ENCODE measurements at regions of chr5 and their contacts with region 1.

Region 1: DNA sequence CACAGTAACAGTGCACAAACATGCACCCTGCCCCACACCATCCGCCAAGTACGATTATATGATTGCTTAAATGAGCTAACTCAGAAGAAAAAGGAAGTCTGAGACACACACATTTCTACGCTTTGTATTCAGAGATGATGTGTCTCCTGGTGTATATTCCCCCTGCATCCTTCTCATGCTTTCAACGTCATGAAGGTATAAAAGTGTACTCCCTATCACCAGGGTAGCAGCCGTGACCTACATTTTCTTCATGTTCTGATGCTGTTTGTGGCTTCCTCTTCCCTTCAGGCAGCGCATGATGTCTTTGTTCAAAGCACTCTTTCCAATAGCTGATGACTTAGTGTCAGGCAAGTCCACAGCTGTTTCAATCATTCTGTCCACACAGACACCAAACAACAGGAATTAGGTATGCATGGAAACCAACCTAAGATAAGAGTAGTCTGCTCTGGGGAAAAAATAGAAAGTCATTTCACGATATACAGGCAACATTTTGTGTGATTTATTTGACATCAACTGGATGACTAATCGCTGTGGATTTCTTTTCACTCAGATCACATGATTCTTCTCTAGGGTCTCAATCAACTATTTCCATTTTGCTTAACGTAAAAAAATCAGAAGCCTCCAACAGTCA is 269.4 kb upstream of the PTGER4 start:
- DNase-seq: peak in 13 of 14 experiments; percentile 44 to 97 (median 66)
- ATAC-seq: peak; percentile 79
- H3K4me3 ChIP-seq: peak overlapping the region; percentile 33
- H3K4me3 Mint-ChIP-seq: peak overlapping the region; percentile 65
- H3K27ac ChIP-seq: peak overlapping the region; percentile 94 to 96
- H3K27ac Mint-ChIP-seq: peak overlapping the region; percentile 87
- H3K4me1 ChIP-seq: peaks cover 53% of the 10 kb centered on the region
- H3K4me1 Mint-ChIP-seq: peaks cover 53% of the 10 kb centered on the region
- H3K27me3 ChIP-seq: no peaks in the 10 kb centered on the region
- H3K27me3 Mint-ChIP-seq: no peaks in the 10 kb centered on the region
- CTCF ChIP-seq: no peak

Region 2: DNA sequence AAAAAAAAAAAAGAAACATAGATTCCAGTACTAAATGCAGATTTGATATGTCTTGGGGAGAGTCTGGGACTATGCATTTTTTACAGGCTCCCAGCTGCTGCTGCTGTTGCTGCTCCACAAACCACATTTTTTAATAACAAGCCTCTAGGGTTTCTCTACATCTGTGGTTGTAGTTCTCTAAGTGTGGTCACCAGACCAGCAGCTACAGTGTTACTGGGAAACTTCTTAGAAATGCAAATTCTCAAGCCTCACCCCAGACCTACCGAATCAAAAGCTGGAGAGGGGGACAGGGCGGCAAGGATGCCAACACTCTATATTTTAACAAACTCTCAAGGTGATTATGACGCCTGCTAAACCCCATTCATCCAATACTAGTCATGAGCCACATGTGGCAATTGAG is 24.1 kb before region 1 on chr5:
- CTCF ChIA-PET with region 1: interaction called, 12 read pairs
- POLR2A ChIA-PET with region 1: interaction called, 16 read pairs
- intact Hi-C with region 1: loop called in 1 of 2 experiments (anchors 2 kb)
- DNase-seq: peak in 4 of 14 experiments; percentile 9 to 76 (median 61)
- ATAC-seq: peak; percentile 62
- H3K4me3 ChIP-seq: no peak overlapping the region
- H3K4me3 Mint-ChIP-seq: no peak overlapping the region
- H3K27ac ChIP-seq: peak overlapping the region in 1 of 2 donors; percentile 33
- H3K27ac Mint-ChIP-seq: peak overlapping the region; percentile 65
- H3K4me1 ChIP-seq: peaks cover 45% of the 10 kb centered on the region
- H3K4me1 Mint-ChIP-seq: peaks cover 82% of the 10 kb centered on the region
- H3K27me3 ChIP-seq: no peaks in the 10 kb centered on the region
- H3K27me3 Mint-ChIP-seq: no peaks in the 10 kb centered on the region
- CTCF ChIP-seq: no peak

Region 3: DNA sequence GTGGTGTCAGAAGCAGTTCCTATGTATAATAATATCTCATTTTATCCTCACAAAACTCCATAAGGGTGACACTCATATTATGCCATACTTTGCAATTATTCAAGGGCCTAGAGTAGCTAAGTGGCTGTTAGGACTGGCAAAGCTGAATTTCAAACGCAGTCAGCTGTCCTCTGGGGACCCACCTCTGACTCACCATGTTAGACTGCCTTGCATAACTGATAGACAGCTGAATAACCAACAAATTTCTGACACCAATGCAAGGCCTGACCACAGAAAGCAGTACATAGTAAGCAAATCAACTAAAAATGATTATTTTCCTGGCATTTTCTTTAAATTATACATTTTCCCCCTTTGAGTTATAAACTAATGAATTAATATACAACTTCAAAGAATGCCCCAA is 17.8 kb after region 1 on chr5:
- CTCF ChIA-PET with region 1: interaction called, 4 read pairs
- POLR2A ChIA-PET with region 1: interaction called, 29 read pairs
- intact Hi-C with region 1: no loop called
- DNase-seq: peak in 3 of 14 experiments; percentile 34 to 61 (median 48)
- ATAC-seq: peak; percentile 43
- H3K4me3 ChIP-seq: no peak overlapping the region
- H3K4me3 Mint-ChIP-seq: no peak overlapping the region
- H3K27ac ChIP-seq: no peak overlapping the region
- H3K27ac Mint-ChIP-seq: no peak overlapping the region
- H3K4me1 ChIP-seq: peaks cover 17% of the 10 kb centered on the region
- H3K4me1 Mint-ChIP-seq: peaks cover 22% of the 10 kb centered on the region
- H3K27me3 ChIP-seq: no peaks in the 10 kb centered on the region
- H3K27me3 Mint-ChIP-seq: no peaks in the 10 kb centered on the region
- CTCF ChIP-seq: no peak

Region 4: DNA sequence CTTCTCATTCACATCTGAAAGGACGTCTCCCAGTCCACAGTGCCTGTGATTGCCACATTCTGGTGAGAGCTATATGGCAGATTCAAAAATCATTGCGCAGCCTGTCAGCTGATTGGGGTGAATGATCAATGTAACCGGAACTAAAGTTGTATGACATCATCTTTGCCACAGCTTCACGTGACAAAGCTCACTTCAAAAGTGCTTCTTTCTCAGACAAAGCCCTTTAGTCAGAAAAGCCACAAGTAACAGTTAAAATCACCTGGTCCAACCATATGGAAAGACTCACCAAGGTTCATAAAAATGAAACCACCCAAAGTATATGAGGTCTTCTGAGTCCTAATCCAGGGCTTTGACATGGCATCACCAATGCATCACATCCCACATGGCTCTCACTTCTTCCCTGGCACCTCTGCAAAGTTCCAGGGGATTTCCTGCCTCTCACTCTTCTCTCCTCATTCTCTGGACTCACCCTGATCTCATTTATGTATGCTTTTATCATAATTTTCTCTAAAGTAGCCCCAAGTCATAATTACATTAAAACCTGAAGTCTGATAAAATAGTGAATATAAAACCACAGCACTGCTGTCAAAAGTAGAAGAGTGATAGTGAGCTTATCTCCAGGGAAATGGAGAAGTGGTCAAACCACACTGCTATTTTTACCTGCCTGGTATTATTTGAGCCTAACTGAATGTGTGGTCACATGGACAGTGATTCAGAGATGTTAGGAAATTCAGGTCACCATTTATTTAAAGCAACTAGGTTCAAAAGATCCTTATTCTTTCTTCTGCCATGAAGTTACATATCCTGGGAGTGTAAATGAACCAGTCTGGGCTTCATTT is 76.3 kb after region 1 on chr5:
- CTCF ChIA-PET with region 1: no interaction called
- POLR2A ChIA-PET with region 1: no interaction called
- intact Hi-C with region 1: loop called in 1 of 2 experiments (anchors 2 kb)
- DNase-seq: peak in 11 of 14 experiments; percentile 1 to 88 (median 19)
- ATAC-seq: peak; percentile 85
- H3K4me3 ChIP-seq: no peak overlapping the region
- H3K4me3 Mint-ChIP-seq: peak overlapping the region; percentile 26
- H3K27ac ChIP-seq: peak overlapping the region in 1 of 2 donors; percentile 8
- H3K27ac Mint-ChIP-seq: peak overlapping the region; percentile 64
- H3K4me1 ChIP-seq: peaks cover 5% of the 10 kb centered on the region
- H3K4me1 Mint-ChIP-seq: peaks cover 42% of the 10 kb centered on the region
- H3K27me3 ChIP-seq: no peaks in the 10 kb centered on the region
- H3K27me3 Mint-ChIP-seq: no peaks in the 10 kb centered on the region
- CTCF ChIP-seq: no peak

Region 5: DNA sequence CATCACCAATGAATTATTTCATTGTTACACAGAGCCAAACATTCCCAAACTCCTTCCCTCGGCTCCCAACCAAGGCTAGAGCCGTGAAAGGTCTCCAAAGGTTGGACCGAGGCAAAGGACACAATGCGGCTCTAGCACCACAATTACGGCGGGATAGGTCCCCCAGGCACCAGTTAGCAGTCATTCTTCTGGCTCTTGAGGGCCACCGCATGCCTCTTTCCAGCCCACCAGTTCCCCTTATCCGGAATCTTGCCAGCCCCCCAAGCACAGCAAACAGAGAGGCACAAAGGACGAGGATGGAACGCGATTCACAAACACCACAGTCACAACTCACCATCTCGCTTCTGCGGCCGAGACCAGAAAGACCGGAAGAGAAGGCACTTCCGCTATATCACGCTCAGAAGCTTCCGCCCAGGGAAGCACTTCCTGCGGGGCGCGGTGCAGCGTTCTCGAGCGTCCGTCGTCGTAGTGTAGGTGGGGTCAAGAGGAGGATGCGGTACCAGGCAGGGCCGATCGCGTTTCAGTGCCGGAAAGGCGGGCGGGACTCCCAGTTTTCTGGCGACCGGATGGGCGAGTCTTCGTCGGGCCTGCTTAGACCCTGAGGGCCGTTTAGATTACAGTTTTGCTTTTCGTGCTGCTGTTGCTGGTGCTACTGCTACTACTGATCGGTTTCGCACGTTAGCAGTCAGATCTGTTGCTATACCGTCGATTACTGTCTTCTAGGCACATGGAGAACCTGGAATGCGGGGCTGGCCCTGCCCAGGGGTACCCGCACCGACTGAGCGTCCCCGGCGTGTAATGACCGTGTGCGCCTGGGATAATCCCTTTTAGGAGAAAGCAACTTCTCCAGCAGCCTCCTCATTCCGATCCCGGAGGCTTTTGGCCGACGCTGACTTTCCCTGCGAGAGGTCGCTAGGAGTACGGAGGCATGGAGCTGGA is 424.8 kb after region 1 on chr5 and contains the start of gene RPL37:
- CTCF ChIA-PET with region 1: no interaction called
- POLR2A ChIA-PET with region 1: no interaction called
- intact Hi-C with region 1: loop called (anchors 2 to 10 kb)
- DNase-seq: peak; percentile 84 to 96 (median 88)
- ATAC-seq: peak; percentile 82
- H3K4me3 ChIP-seq: peak within 1 kb of the TSS; percentile 84
- H3K4me3 Mint-ChIP-seq: peak within 1 kb of the TSS; percentile 95
- H3K27ac ChIP-seq: peak within 1 kb of the TSS; percentile 92 to 94
- H3K27ac Mint-ChIP-seq: peak within 1 kb of the TSS; percentile 97
- H3K4me1 ChIP-seq: peaks cover 45% of the 10 kb centered on the region
- H3K4me1 Mint-ChIP-seq: peaks cover 56% of the 10 kb centered on the region
- H3K27me3 ChIP-seq: no peaks in the 10 kb centered on the region
- H3K27me3 Mint-ChIP-seq: no peaks in the 10 kb centered on the region
- CTCF ChIP-seq: no peak
- total RNA-seq, gene RPL37: 2,845 to 2,986 TPM